A673 (cell line): ENCODE measurements at regions of chr11 and their contacts with region 1.

Region 1: GRCh38 chr11:87193756-87194470 is 156.2 kb downstream of the TMEM135 start:
- DNase-seq: peak; percentile 41
- H3K4me3 ChIP-seq: no peak overlapping the region
- H3K27ac ChIP-seq: peak overlapping the region; percentile 99
- H3K4me1 ChIP-seq: peaks cover 85% of the 10 kb centered on the region
- H3K27me3 ChIP-seq: no peaks in the 10 kb centered on the region
- CTCF ChIP-seq: no peak

Region 2: GRCh38 chr11:86938900-86939880 is 254.7 kb before region 1 on chr11:
- CTCF ChIA-PET with region 1: interaction called, 7 read pairs
- POLR2A ChIA-PET with region 1: no interaction called
- intact Hi-C with region 1: loop called (anchors 1 kb)
- DNase-seq: peak; percentile 90
- H3K4me3 ChIP-seq: peak overlapping the region; percentile 19
- H3K27ac ChIP-seq: peak overlapping the region; percentile 97
- H3K4me1 ChIP-seq: peaks cover 85% of the 10 kb centered on the region
- H3K27me3 ChIP-seq: no peaks in the 10 kb centered on the region
- CTCF ChIP-seq: peak; percentile 76

Region 3: GRCh38 chr11:87022254-87022653 is 171.7 kb before region 1 on chr11:
- CTCF ChIA-PET with region 1: no interaction called
- POLR2A ChIA-PET with region 1: no interaction called
- intact Hi-C with region 1: no loop called
- DNase-seq: no peak
- H3K4me3 ChIP-seq: no peak overlapping the region
- H3K27ac ChIP-seq: no peak overlapping the region
- H3K4me1 ChIP-seq: peaks cover 13% of the 10 kb centered on the region
- H3K27me3 ChIP-seq: no peaks in the 10 kb centered on the region
- CTCF ChIP-seq: no peak

Region 4: GRCh38 chr11:87097582-87097981 is 96.3 kb before region 1 on chr11:
- CTCF ChIA-PET with region 1: no interaction called
- POLR2A ChIA-PET with region 1: no interaction called
- intact Hi-C with region 1: loop called (anchors 2 kb)
- DNase-seq: peak; percentile 84
- H3K4me3 ChIP-seq: no peak overlapping the region
- H3K27ac ChIP-seq: peak overlapping the region; percentile 31
- H3K4me1 ChIP-seq: peaks cover 6% of the 10 kb centered on the region
- H3K27me3 ChIP-seq: no peaks in the 10 kb centered on the region
- CTCF ChIP-seq: peak; percentile 88

Region 5: GRCh38 chr11:87180742-87181141 is 13.2 kb before region 1 on chr11:
- CTCF ChIA-PET with region 1: no interaction called
- POLR2A ChIA-PET with region 1: no interaction called
- intact Hi-C with region 1: no loop called
- DNase-seq: no peak
- H3K4me3 ChIP-seq: no peak overlapping the region
- H3K27ac ChIP-seq: no peak overlapping the region
- H3K4me1 ChIP-seq: peaks cover 24% of the 10 kb centered on the region
- H3K27me3 ChIP-seq: no peaks in the 10 kb centered on the region
- CTCF ChIP-seq: no peak

Region 6: DNA sequence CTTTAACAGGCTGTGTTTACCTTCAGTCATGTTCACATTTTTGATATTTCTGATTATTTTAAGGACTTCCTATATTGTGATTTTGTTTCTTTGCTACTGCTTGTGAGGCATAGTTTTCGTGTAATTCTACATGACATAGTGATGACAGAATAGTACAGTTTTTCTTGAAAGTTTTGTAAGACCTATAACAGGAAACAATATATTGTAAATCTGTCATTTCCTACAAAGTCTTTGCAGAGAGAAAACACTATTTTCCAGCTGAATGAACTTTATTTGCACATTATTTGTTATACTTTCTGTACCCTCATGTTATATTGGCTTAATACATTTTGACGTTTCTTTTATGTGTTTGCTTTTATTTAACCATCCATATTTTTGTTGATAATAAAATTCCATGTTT is 34.9 kb after region 1 on chr11:
- CTCF ChIA-PET with region 1: no interaction called
- POLR2A ChIA-PET with region 1: no interaction called
- intact Hi-C with region 1: no loop called
- DNase-seq: peak; percentile 76
- H3K4me3 ChIP-seq: no peak overlapping the region
- H3K27ac ChIP-seq: peak overlapping the region; percentile 80
- H3K4me1 ChIP-seq: peaks cover 55% of the 10 kb centered on the region
- H3K27me3 ChIP-seq: no peaks in the 10 kb centered on the region
- CTCF ChIP-seq: no peak

Region 7: DNA sequence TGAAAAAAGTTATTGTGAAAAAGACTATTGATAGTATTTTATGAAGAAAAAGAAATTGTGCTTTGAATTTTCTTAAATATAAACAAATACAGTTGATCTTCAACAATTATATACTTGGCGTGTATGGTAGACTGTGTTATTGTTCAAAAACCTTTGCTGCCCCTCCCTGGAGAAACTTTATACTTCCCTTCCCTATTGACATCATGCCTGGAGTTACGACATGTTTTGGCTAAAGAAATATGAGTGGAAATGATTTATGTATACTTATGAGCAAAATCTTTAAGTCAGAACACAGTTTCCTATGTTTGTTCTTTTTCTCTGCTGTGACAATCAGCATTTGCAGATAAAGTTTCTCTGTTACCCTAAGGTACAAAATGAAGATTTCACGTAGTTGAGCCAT is 87.6 kb after region 1 on chr11:
- CTCF ChIA-PET with region 1: no interaction called
- POLR2A ChIA-PET with region 1: no interaction called
- intact Hi-C with region 1: loop called (anchors 2 kb)
- DNase-seq: peak; percentile 82
- H3K4me3 ChIP-seq: no peak overlapping the region
- H3K27ac ChIP-seq: peak overlapping the region; percentile 74
- H3K4me1 ChIP-seq: peaks cover 38% of the 10 kb centered on the region
- H3K27me3 ChIP-seq: no peaks in the 10 kb centered on the region
- CTCF ChIP-seq: peak; percentile 57